Activated T-helper 1 cell treated with anti-CD3 and anti-CD28 coated beads, Interleukin-12 subunit alpha, Interleukin-12 subunit beta, Interleukin-2, Interleukin-4 antibody, amounts not matched to agents 30 ng/mL and 10 ng/mL and 1 ng/mL, durations not matched to agents 14 hours and 24 hours and 36 hours (primary cell): ENCODE measurements at regions of chr15 and their contacts with region 1.

Region 1: DNA sequence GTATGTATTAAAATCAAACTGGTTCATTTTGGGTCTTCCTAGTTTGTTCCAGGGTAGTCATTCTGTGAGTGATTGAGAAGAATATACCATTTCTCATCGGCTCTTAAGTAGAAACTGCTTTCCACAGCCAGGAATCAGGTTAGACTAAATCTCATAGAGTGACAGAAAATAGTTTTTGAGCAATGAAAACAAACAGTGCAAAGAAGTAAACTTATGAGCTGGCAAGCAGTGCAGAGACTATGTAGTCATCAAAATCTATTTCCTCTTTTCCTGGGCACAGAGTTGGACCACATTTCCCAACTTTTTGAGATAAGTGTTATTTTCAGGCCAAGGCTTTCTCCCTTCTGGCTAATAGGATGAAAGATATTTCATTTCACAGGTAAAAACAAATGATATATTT is 66.5 kb downstream of the UBE3A start:
- DNase-seq: no peak
- H3K4me3 Mint-ChIP-seq: no peak overlapping the region
- H3K27ac Mint-ChIP-seq: no peak overlapping the region
- H3K4me1 Mint-ChIP-seq: no peaks in the 10 kb centered on the region
- H3K27me3 Mint-ChIP-seq: no peaks in the 10 kb centered on the region

Region 2: GRCh38 chr15:24956111-24956838 is 416.0 kb before region 1 on chr15:
- intact Hi-C with region 1: loop called (anchors 5 kb)
- DNase-seq: peak; percentile 65
- H3K4me3 Mint-ChIP-seq: peak overlapping the region; percentile 95
- H3K27ac Mint-ChIP-seq: peak overlapping the region; percentile 92
- H3K4me1 Mint-ChIP-seq: peaks cover 10% of the 10 kb centered on the region
- H3K27me3 Mint-ChIP-seq: no peaks in the 10 kb centered on the region

Region 3: GRCh38 chr15:25056484-25057425 is 315.5 kb before region 1 on chr15:
- intact Hi-C with region 1: no loop called
- DNase-seq: no peak
- H3K4me3 Mint-ChIP-seq: no peak overlapping the region
- H3K27ac Mint-ChIP-seq: no peak overlapping the region
- H3K4me1 Mint-ChIP-seq: no peaks in the 10 kb centered on the region
- H3K27me3 Mint-ChIP-seq: no peaks in the 10 kb centered on the region

Region 4: GRCh38 chr15:25408428-25408827 is 36.1 kb after region 1 on chr15:
- intact Hi-C with region 1: loop called (anchors 5 kb)
- DNase-seq: no peak
- H3K4me3 Mint-ChIP-seq: no peak overlapping the region
- H3K27ac Mint-ChIP-seq: no peak overlapping the region
- H3K4me1 Mint-ChIP-seq: peaks cover 9% of the 10 kb centered on the region
- H3K27me3 Mint-ChIP-seq: no peaks in the 10 kb centered on the region